ENCODE measurements at regions of chr19 and their contacts with region 1.

Region 1: DNA sequence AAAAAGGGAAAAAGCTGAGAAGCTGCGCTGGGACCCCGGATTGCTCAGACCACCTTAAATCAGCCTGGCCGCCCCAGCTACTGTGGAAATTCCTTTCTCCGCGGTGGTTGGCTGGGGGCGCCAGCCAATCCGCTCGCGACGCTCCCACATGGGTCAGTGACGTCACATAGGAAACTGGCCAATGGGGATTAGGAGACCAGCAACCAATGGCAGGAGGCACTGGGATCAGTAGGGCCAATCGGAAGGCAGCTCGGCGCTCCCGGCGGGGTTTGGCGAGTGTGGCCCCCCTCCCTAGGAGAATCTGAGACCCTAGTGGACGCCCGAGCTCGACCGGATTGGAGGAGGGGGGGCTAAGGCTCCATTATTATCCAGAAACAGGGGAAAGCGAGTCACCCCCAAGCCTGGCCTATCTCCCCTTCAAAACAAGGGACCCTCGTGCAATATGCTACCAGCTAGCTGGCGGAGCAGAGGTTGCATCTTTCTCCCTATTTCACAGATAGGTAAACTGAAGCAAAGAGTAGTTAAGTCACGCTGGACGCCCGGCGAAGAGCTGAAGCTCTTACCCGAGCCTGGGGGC is 6.5 kb upstream of the TLE2 start:
- DNase-seq: peak; percentile 98
- ATAC-seq: peak; percentile 84
- H3K4me3 ChIP-seq: peak overlapping the region; percentile 73 to 82 (median 78)
- H3K27ac ChIP-seq: peak overlapping the region; percentile 85
- H3K4me1 ChIP-seq: peaks cover 67% of the 10 kb centered on the region
- H3K27me3 ChIP-seq: peaks cover 3 to 16% of the 10 kb centered on the region in 2 experiments; a peak in 2 of 5 replicates
- CTCF ChIP-seq: no peak
- EP300 ChIP-seq: peak in 1 of 2 experiments; percentile 17; a peak in 1 of 4 replicates
- POLR2A ChIP-seq: peak in 1 of 2 experiments; percentile 58; a peak in 3 of 4 replicates
- RAD21 ChIP-seq: no peak

Region 2: DNA sequence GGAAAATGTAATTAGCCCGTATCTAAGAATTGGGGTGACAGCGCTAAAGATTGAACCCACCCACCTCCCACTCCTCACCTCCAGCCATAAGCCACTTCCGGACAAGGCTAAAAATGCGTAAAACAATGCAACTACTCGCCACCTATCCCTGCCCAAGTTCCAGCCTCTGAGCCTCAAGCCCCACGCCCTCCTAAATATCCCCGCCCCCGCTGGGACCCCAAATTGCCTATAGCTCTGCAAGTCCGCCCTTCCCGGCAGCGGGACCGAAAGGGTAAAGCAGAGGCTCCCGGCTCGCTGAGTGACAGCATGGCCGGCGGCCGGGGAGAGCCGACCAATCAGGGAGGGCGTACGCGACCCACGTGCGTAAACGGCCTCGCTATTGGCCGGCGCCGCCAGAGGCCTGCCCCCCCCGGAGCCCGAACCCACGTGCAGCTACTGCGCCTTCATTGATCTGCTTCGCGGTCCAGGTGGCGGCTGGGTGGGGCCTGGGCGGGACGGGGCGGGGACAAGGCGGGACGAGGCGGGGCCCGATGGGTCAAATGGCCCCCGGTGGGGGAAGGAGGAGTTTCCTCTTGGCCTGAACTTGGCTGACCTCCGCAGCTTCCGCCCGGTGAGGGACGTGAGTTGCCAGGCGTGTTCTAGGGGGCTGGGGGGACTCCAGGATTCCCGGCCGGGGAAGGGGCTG is 58.5 kb before region 1 on chr19 and contains the start of gene TLE6:
- CTCF ChIA-PET with region 1: no interaction called
- POLR2A ChIA-PET with region 1: interaction called, 10 read pairs
- in situ Hi-C with region 1: no loop called
- intact Hi-C with region 1: loop called (anchors 1 kb)
- DNase-seq: peak; percentile 92
- ATAC-seq: peak; percentile 93
- H3K4me3 ChIP-seq: peak within 1 kb of the TSS; percentile 62 to 78 (median 69)
- H3K27ac ChIP-seq: peak within 1 kb of the TSS; percentile 40
- H3K4me1 ChIP-seq: peaks cover 51% of the 10 kb centered on the region
- H3K27me3 ChIP-seq: peaks cover 0 to 25% of the 10 kb centered on the region in 2 experiments; a peak in 4 of 5 replicates
- CTCF ChIP-seq: no peak
- EP300 ChIP-seq: peak in 1 of 2 experiments; percentile 55; a peak in 2 of 4 replicates
- POLR2A ChIP-seq: peak in 1 of 2 experiments; percentile 39; a peak in 1 of 4 replicates
- RAD21 ChIP-seq: no peak
- total RNA-seq, gene TLE6: 0.24 and 0.28 TPM in 2 replicates

Region 3: DNA sequence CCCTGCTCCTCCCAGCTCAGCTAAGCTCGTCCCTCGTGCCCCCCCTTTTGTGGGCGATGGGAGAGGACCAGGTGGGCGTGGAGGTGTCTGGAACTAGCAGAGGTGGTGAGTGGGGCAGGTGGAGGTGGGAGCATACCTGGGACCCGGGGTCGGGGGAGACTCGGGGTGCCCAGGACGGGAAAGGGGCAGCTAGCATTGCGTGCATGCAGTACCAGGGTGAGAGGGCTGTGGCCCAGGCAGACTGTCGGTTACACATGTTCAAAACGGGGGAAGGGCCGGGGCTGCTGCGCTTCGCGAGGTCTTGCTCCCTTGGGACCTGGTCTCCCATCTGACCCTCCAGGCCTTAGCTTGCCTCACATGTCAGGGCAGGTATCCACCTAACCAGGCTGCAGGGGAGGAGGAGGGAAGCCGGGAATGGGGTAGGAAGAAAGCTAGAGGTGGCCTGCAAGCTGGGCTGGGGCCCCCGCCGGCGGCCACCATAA is 17.6 kb after region 1 on chr19:
- CTCF ChIA-PET with region 1: no interaction called
- POLR2A ChIA-PET with region 1: interaction called, 21 read pairs
- in situ Hi-C with region 1: no loop called
- intact Hi-C with region 1: no loop called
- DNase-seq: no peak
- ATAC-seq: no peak
- H3K4me3 ChIP-seq: no peak overlapping the region
- H3K27ac ChIP-seq: no peak overlapping the region
- H3K4me1 ChIP-seq: peaks cover 9% of the 10 kb centered on the region
- H3K27me3 ChIP-seq: no peaks in the 10 kb centered on the region; a peak in 1 of 5 replicates
- CTCF ChIP-seq: no peak
- EP300 ChIP-seq: no peak
- POLR2A ChIP-seq: 0 out of 4 replicates have a peak, but pooled peaks of 1 of the 2 experiments have one; percentile 19
- RAD21 ChIP-seq: no peak

Region 4: GRCh38 chr19:3094601-3095437 is 59.2 kb after region 1 on chr19:
- CTCF ChIA-PET with region 1: no interaction called
- POLR2A ChIA-PET with region 1: interaction called, 16 read pairs
- in situ Hi-C with region 1: no loop called
- intact Hi-C with region 1: no loop called
- DNase-seq: no peak
- ATAC-seq: peak; percentile 3; the same call in 1 of the 3 replicates
- H3K4me3 ChIP-seq: peak overlapping the region; percentile 64 to 97 (median 94)
- H3K27ac ChIP-seq: peak overlapping the region; percentile 93
- H3K4me1 ChIP-seq: peaks cover 22% of the 10 kb centered on the region
- H3K27me3 ChIP-seq: no peaks in the 10 kb centered on the region
- CTCF ChIP-seq: no peak
- EP300 ChIP-seq: no peak
- POLR2A ChIP-seq: no peak
- RAD21 ChIP-seq: no peak